Mammary epithelial cell (primary cell): ENCODE measurements at regions of chr5 and their contacts with region 1.

Region 1: GRCh38 chr5:137876101-137876500 is 8.4 kb downstream of the MYOT start:
- DNase-seq: no peak
- H3K4me3 ChIP-seq: no peak overlapping the region
- H3K27ac ChIP-seq: no peak overlapping the region
- H3K4me1 ChIP-seq: peaks cover 13% of the 10 kb centered on the region
- H3K27me3 ChIP-seq: no peaks in the 10 kb centered on the region
- CTCF ChIP-seq: no peak

Region 2: DNA sequence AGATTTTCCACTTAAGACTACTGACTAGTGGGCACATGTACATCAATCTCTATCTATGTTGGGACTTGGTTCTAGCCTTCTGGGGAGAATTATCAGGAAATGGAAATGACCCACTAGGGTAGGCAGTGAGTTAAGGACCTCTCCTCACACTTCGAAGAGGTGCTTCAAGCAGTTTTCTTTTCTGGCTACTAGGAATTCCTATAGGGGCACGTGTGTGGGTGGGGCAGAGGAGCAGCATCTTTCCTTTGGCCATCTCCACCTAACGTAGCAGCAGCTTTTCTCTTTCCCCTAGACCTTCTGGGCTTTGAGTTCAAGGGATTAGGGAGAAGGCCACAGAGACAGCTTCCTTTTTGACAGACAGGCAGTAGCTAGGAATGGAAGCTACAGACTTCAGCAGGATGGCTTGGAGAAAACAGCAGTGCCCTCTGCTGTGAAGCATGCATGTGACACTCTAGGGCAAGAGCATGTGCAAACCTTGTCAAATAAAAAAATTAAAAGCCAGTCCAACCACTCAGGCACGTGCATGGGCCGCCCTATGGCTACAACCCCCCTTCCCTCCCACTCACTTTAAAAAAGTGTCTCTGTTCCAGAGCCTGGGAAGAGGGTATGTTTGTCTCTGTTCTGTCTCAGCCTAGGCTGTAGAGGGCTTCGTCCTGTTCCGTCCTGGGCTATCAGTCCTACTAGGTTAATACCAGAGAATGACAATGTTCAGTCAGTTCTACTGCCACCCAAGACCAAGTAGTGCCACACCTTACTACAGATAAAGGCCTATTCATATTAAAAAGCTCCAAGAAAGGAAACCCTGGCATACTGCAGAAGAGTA is 407.0 kb after region 1 on chr5:
- CTCF ChIA-PET with region 1: no interaction called
- dilution Hi-C with region 1: no loop called
- in situ Hi-C with region 1: no loop called
- intact Hi-C with region 1: loop called (anchors 5 kb)
- DNase-seq: peak; percentile 37
- H3K4me3 ChIP-seq: no peak overlapping the region
- H3K27ac ChIP-seq: no peak overlapping the region
- H3K4me1 ChIP-seq: no peaks in the 10 kb centered on the region
- H3K27me3 ChIP-seq: no peaks in the 10 kb centered on the region
- CTCF ChIP-seq: peak; percentile 40 to 72